ENCODE measurements at regions of chr1 and their contacts with region 1.

Region 1: GRCh38 chr1:209411491-209411929 is 172.0 kb upstream of the CAMK1G start:
- H3K4me3 Mint-ChIP-seq: no peak overlapping the region
- H3K27ac Mint-ChIP-seq: peak overlapping the region; percentile 75
- H3K4me1 Mint-ChIP-seq: peaks cover 52% of the 10 kb centered on the region
- H3K27me3 Mint-ChIP-seq: peaks cover 20% of the 10 kb centered on the region

Region 2: GRCh38 chr1:209733409-209734192 is 322.1 kb after region 1 on chr1:
- intact Hi-C with region 1: loop called (anchors 2 kb)
- H3K4me3 Mint-ChIP-seq: peak overlapping the region; percentile 8
- H3K27ac Mint-ChIP-seq: peak overlapping the region; percentile 65
- H3K4me1 Mint-ChIP-seq: peaks cover 69% of the 10 kb centered on the region
- H3K27me3 Mint-ChIP-seq: no peaks in the 10 kb centered on the region